Naive thymus-derived CD4-positive, alpha-beta T cell (primary cell): ENCODE measurements at regions of chr7 and their contacts with region 1.

Region 1: DNA sequence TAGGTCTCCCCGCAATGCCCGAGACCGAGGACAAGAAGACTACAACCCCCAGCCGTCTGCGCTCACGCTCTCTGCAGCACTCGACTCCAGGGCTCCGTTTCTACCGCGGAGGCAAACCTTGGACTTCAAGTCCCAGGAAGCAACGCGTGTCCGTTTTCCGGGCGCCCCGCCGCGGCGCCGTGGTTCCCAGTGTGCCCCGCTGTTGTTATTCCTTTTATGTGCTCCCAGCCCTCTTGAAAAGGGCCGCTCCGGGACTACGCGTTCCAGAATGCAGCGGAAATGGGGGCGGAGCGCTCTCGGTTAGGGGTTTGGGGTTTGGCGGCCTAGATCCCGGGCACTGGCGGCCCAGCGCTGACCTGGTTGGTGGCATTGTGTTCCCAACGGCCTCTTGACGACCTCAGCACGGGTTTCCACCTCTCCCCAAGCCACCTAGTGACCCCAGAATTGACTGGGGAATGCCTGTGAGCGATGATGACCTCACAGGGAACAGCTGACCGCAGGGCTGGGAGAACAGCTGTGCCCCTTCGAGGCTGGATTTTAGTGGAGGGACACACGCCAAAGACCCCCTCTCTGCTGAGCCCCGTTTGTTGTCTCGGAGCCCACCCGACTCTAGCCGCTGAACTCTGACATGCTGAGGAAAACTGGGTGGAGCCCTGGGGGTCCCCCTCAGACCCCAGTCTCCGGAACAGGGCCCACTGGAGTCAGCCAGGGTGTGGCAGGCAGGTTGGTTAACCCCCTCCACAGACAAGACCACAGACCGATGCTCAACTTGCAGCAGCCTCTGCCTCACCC is 488 bp upstream of the CDK5 start:
- DNase-seq: peak; percentile 80 to 99 (median 97)
- ATAC-seq: peak; percentile 96
- H3K4me3 ChIP-seq: peak overlapping the region; percentile 78
- H3K4me3 Mint-ChIP-seq: peak overlapping the region; percentile 91 to 99 (median 94)
- H3K27ac ChIP-seq: peak overlapping the region; percentile 92
- H3K27ac Mint-ChIP-seq: peak overlapping the region; percentile 86 to 96 (median 93)
- H3K4me1 ChIP-seq: peaks cover 25 to 32% of the 10 kb centered on the region in 2 donors
- H3K4me1 Mint-ChIP-seq: peaks cover 25 to 41% (median 38%) of the 10 kb centered on the region in 7 donors
- H3K27me3 ChIP-seq: no peaks in the 10 kb centered on the region
- H3K27me3 Mint-ChIP-seq: no peaks in the 10 kb centered on the region

Region 2: DNA sequence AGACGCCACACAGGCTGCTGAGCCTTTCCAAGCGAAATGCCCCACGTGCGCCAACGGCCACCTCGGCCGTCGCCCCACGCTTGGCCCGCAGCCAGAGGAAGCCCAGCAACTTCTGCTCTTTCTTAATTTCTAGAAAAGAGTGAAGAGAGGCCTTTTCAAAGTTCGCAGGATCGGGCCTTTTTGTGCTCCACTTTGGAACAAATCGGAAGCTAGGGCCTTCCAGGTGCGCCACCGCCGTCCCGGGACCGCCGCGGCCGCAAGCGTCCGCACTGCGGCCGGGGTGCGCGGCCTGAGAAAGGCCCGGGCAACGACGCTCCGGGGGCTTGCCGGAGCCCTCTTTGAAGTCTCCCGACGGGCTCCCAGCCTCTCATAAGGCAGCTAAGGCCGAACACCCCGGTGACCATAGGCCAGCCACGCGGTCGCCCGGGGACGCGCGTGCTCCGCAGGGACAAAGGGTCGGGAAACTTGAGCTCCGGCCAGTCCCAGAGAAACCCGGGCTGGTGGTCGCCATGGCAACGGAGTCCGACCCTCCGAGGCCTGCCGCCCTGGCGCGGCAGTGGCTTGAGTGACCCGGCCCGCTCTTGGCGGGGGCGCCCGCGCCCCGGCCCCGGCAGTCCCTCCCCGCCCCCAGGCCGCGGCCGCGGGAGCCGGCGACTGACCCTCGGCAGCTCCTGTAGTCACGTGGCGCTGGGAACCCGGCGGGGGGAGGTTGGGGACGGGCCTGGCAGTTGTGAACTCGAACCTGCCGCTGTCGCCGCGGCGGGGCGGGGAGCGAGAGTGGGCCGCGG is 689.9 kb before region 1 on chr7 and contains the start of gene REPIN1:
- CTCF ChIA-PET with region 1: no interaction called
- POLR2A ChIA-PET with region 1: no interaction called
- intact Hi-C with region 1: loop called in 1 of 2 experiments (anchors 2 kb)
- DNase-seq: peak; percentile 65 to 88 (median 80)
- ATAC-seq: peak; percentile 74
- H3K4me3 ChIP-seq: peak within 1 kb of the TSS; percentile 99
- H3K4me3 Mint-ChIP-seq: peak within 1 kb of the TSS; percentile 91 to 97 (median 95)
- H3K27ac ChIP-seq: peak within 1 kb of the TSS; percentile 83
- H3K27ac Mint-ChIP-seq: peak within 1 kb of the TSS; percentile 88 to 97 (median 95)
- H3K4me1 ChIP-seq: peaks cover 11 to 39% of the 10 kb centered on the region in 2 donors
- H3K4me1 Mint-ChIP-seq: peaks cover 24 to 67% (median 58%) of the 10 kb centered on the region in 7 donors
- H3K27me3 ChIP-seq: no peaks in the 10 kb centered on the region
- H3K27me3 Mint-ChIP-seq: no peaks in the 10 kb centered on the region
- total RNA-seq, gene REPIN1: 68.5 to 103 (median 79.7) TPM

Region 3: GRCh38 chr7:150962553-150963399 is 95.4 kb before region 1 on chr7:
- CTCF ChIA-PET with region 1: no interaction called
- POLR2A ChIA-PET with region 1: no interaction called
- intact Hi-C with region 1: no loop called
- DNase-seq: peak; percentile 31 to 69 (median 53)
- ATAC-seq: peak; percentile 82
- H3K4me3 ChIP-seq: no peak overlapping the region
- H3K4me3 Mint-ChIP-seq: peak overlapping the region in 1 of 10 donors; percentile 51
- H3K27ac ChIP-seq: no peak overlapping the region
- H3K27ac Mint-ChIP-seq: no peak overlapping the region
- H3K4me1 ChIP-seq: no peaks in the 10 kb centered on the region
- H3K4me1 Mint-ChIP-seq: peaks cover 9 to 41% (median 24%) of the 10 kb centered on the region in 7 donors
- H3K27me3 ChIP-seq: no peaks in the 10 kb centered on the region
- H3K27me3 Mint-ChIP-seq: peaks cover 15 to 36% (median 20%) of the 10 kb centered on the region in 5 donors

Region 4: DNA sequence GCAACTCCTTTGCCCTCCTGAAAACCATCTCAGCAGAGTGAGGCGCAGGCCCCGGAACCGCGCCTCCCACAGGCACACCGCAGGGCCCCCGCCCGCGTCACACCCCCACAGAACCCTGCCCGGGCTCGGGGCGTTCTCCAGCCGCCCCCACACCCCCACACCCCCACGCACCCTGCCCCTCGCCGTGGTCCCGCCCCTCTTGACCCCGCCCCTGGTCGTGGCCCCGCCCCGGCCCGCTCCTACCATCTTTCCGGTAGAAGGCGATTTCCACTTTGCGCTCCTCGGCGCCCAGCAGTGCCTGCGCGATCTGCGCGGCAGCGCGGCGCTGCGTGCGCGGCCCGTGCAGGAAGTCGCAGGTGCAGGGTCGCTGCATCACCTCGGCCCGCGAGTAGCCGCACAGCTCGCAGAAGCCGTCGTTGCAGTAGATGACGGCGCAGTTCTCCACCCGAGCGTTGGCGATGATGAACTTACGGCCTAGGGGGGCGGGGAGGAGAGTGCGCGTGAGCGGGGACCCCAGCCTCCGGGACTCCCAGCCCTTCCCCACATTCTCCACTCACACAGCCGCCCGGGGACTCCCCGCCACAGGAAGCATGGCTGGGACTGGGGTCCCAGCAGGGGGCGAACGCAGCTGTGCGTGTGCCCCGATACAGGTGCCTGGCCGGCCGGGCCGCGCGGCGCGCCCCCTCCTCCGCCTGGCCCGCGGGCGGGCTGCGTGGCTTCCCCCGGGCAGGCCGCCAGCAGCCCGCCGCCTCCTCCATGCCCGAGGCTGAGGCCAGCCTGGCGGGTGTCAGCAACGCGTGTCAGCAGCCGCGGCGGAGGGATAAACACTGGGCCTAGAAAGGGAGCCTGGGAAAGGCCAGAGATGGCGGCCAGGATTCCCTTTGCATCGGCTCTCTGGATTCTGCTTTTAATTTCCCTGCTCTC is 83.5 kb before region 1 on chr7:
- CTCF ChIA-PET with region 1: no interaction called
- POLR2A ChIA-PET with region 1: interaction called, 3 read pairs
- intact Hi-C with region 1: loop called (anchors 1 kb)
- DNase-seq: peak; percentile 63 to 84 (median 80)
- ATAC-seq: peak; percentile 85
- H3K4me3 ChIP-seq: peak overlapping the region; percentile 63
- H3K4me3 Mint-ChIP-seq: peak overlapping the region; percentile 85 to 92 (median 88)
- H3K27ac ChIP-seq: peak overlapping the region; percentile 73
- H3K27ac Mint-ChIP-seq: peak overlapping the region; percentile 59 to 97 (median 95)
- H3K4me1 ChIP-seq: peaks cover 20 to 47% of the 10 kb centered on the region in 2 donors
- H3K4me1 Mint-ChIP-seq: peaks cover 33 to 62% (median 55%) of the 10 kb centered on the region in 7 donors
- H3K27me3 ChIP-seq: peaks cover 7 to 13% of the 10 kb centered on the region in 2 donors
- H3K27me3 Mint-ChIP-seq: peaks cover 9 to 36% (median 25%) of the 10 kb centered on the region in 5 donors

Region 5: GRCh38 chr7:151091431-151091830 is 33.2 kb after region 1 on chr7:
- CTCF ChIA-PET with region 1: interaction called, 3 read pairs
- POLR2A ChIA-PET with region 1: interaction called, 3 read pairs
- intact Hi-C with region 1: loop called in 1 of 2 experiments (anchors 5 kb)
- DNase-seq: no peak
- ATAC-seq: no peak
- H3K4me3 ChIP-seq: no peak overlapping the region
- H3K4me3 Mint-ChIP-seq: no peak overlapping the region
- H3K27ac ChIP-seq: no peak overlapping the region
- H3K27ac Mint-ChIP-seq: peak overlapping the region in 1 of 9 donors; percentile 43
- H3K4me1 ChIP-seq: peaks cover 5 to 9% of the 10 kb centered on the region in 2 donors
- H3K4me1 Mint-ChIP-seq: peaks cover 8 to 26% (median 23%) of the 10 kb centered on the region in 7 donors
- H3K27me3 ChIP-seq: no peaks in the 10 kb centered on the region
- H3K27me3 Mint-ChIP-seq: no peaks in the 10 kb centered on the region

Region 6: DNA sequence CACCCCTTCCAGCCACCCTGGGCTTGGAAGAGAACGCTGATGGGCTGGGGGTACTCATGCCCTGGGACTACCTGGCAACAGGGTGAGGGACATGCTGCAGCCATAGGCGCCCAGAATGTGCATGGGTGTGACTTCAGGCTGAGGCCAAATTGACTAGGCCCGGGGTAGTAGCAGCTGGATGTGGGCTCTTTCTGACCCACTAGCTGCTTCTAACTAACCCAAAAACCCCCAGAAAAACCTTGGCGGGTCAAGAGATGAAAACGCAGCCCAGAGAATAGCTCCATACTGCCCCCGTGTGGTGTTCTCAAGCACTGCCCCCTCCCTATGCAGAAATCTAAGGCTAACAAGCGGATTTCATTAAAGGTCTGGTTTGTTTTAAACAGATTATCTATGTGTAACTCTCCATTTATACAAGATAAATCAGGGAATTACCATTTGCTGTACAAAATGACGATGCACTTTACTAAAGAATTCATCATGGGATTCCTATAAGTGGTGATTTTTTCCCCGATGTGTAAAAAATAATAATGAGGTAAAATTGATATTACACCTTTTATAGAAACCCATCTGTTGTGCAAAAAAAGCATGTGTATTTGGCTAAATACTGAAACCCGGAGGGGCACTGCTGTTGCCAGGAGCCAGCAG is 186.1 kb after region 1 on chr7:
- CTCF ChIA-PET with region 1: no interaction called
- POLR2A ChIA-PET with region 1: no interaction called
- intact Hi-C with region 1: no loop called
- DNase-seq: peak in 6 of 9 donors; percentile 44 to 63 (median 54)
- ATAC-seq: peak; percentile 52
- H3K4me3 ChIP-seq: peak overlapping the region; percentile 40
- H3K4me3 Mint-ChIP-seq: peak overlapping the region; percentile 71 to 93 (median 78)
- H3K27ac ChIP-seq: no peak overlapping the region
- H3K27ac Mint-ChIP-seq: peak overlapping the region in 6 of 9 donors; percentile 9 to 90 (median 68)
- H3K4me1 ChIP-seq: peaks cover 22 to 36% of the 10 kb centered on the region in 2 donors
- H3K4me1 Mint-ChIP-seq: peaks cover 27 to 53% (median 38%) of the 10 kb centered on the region in 7 donors
- H3K27me3 ChIP-seq: peaks cover 0 to under 1% of the 10 kb centered on the region in 2 donors
- H3K27me3 Mint-ChIP-seq: peaks cover 3 to 37% (median 21%) of the 10 kb centered on the region in 5 donors